ENCODE measurements at regions of chr11 and their contacts with region 1.

Region 1: GRCh38 chr11:61111786-61112517 is 9.7 kb downstream of the CD5 start:
- DNase-seq: peak; percentile 92
- H3K4me3 Mint-ChIP-seq: no peak overlapping the region
- H3K27ac Mint-ChIP-seq: peak overlapping the region; percentile 90
- H3K4me1 Mint-ChIP-seq: peaks cover 91% of the 10 kb centered on the region
- H3K27me3 Mint-ChIP-seq: no peaks in the 10 kb centered on the region

Region 2: GRCh38 chr11:60978546-60979380 is 133.2 kb before region 1 on chr11:
- intact Hi-C with region 1: loop called (anchors 2 kb)
- DNase-seq: peak; percentile 84
- H3K4me3 Mint-ChIP-seq: peak overlapping the region; percentile 90
- H3K27ac Mint-ChIP-seq: peak overlapping the region; percentile 95
- H3K4me1 Mint-ChIP-seq: peaks cover 72% of the 10 kb centered on the region
- H3K27me3 Mint-ChIP-seq: no peaks in the 10 kb centered on the region

Region 3: GRCh38 chr11:60985991-60986915 is 125.7 kb before region 1 on chr11:
- intact Hi-C with region 1: loop called (anchors 2 kb)
- DNase-seq: peak; percentile 95
- H3K4me3 Mint-ChIP-seq: peak overlapping the region; percentile 84
- H3K27ac Mint-ChIP-seq: peak overlapping the region; percentile 94
- H3K4me1 Mint-ChIP-seq: peaks cover 88% of the 10 kb centered on the region
- H3K27me3 Mint-ChIP-seq: no peaks in the 10 kb centered on the region

Region 4: GRCh38 chr11:61091373-61092279 is 20.3 kb before region 1 on chr11:
- intact Hi-C with region 1: loop called (anchors 1 kb)
- DNase-seq: peak; percentile 86
- H3K4me3 Mint-ChIP-seq: peak overlapping the region; percentile 93
- H3K27ac Mint-ChIP-seq: peak overlapping the region; percentile 100
- H3K4me1 Mint-ChIP-seq: peaks cover 69% of the 10 kb centered on the region
- H3K27me3 Mint-ChIP-seq: no peaks in the 10 kb centered on the region